ENCODE measurements at regions of chr14 and their contacts with region 1.

Region 1: DNA sequence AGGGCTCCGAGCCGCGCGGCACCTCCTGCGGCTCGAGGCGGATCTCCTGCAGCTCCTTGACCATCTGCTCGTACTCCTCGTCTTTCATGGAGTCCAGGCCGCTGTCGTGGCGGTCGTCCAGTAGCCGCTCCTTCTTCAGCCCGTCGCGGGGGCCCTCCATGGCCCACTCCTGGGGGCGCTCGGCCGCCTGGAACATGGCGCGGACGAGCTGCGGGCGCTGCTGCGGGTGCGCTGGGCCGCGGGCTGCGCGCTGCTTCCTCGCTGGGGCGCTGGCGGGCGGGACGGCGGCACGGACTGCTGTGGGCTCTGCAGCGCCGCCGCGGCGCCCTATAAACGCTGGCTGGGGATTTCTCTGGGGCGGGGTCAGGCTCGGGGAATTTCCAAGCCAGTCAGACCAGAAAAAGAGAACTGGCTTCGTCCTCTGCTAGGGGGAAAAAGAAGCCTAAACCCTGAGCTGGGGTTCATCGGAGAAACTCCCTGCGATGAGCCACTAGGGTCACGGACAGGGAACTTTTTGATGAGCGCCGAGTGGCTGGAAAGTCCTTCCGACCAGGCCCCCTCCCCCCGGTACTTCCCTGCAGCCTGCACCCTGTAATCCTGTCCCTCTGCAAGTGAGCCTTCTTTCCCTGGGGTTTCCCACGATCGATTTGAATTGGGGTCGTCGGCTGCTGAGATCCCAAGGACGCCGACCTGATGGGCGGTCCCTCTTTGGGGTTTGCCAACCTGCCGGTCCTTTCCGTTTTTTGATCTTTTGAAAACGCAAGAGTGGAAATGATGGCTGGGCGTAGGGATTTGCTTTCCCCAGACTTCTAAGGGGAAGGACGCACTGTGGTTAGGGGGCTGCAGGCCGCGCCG is at the start of gene NFKBIA:
- DNase-seq: peak; percentile 69 to 88 (median 74)
- ATAC-seq: peak; percentile 90
- H3K4me3 ChIP-seq: peak within 1 kb of the TSS; percentile 89
- H3K27ac ChIP-seq: peak within 1 kb of the TSS; percentile 96
- H3K4me1 ChIP-seq: peaks cover 23 to 28% of the 10 kb centered on the region in 2 experiments
- H3K27me3 ChIP-seq: no peaks in the 10 kb centered on the region
- CTCF ChIP-seq: peak; percentile 44 to 96 (median 71); a peak in 5 of 6 replicates
- EP300 ChIP-seq: no peak
- POLR2A ChIP-seq: peak; percentile 75
- RAD21 ChIP-seq: peak; percentile 49 to 53; a peak in 3 of 4 replicates
- polyA plus RNA-seq, gene NFKBIA: 6.9 to 8.8 TPM

Region 2: GRCh38 chr14:34682787-34683321 is 721.8 kb before region 1 on chr14:
- CTCF ChIA-PET with region 1: no interaction called
- POLR2A ChIA-PET with region 1: no interaction called
- in situ Hi-C with region 1: loop called (anchors 10 kb)
- intact Hi-C with region 1: no loop called
- DNase-seq: peak in 1 of 4 experiments; percentile 12
- ATAC-seq: peak; percentile 60
- H3K4me3 ChIP-seq: no peak overlapping the region
- H3K27ac ChIP-seq: no peak overlapping the region; the same call in 2 of the 3 replicates
- H3K4me1 ChIP-seq: peaks cover 0 to 7% of the 10 kb centered on the region in 2 experiments; a peak in 2 of 5 replicates
- H3K27me3 ChIP-seq: no peaks in the 10 kb centered on the region
- CTCF ChIP-seq: no peak
- EP300 ChIP-seq: no peak
- POLR2A ChIP-seq: no peak
- RAD21 ChIP-seq: no peak

Region 3: DNA sequence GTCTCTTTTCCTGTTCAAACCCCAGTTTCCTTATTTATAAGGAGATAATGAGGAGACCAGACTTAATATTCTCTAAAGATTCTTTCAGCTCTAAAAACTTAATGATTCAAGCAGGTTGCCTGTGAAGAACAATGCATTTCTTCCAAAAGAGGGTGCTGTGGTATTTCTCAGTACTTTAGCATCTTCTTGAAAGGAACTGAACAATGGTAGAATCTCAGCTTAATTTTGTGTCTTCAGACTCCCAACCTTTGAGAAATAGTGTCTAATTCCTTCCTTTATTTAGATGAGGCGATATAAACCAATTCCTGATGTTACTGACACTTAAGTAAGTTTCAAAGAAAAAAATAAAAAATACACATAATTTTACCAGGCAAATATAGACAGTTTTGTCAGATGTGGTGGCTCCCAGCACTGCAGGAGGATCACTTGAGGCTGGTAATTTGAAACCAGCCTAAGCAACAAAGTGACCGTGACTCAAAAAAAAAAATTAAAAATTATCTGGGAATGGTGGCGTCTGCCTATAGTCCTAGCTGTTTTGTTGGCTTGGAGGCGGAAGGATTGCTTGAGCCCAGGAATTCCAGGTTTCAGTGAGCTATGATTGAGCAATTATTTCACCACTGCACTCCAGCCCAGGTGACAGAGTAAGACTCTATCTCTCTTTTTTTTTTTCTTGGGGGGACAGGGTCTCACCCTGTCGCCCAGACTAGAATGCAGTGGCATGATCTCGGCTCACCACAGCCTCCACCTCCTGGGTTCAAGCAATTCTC is 189.4 kb before region 1 on chr14:
- CTCF ChIA-PET with region 1: no interaction called
- POLR2A ChIA-PET with region 1: interaction called, 6 read pairs
- in situ Hi-C with region 1: loop called (anchors 5 kb)
- intact Hi-C with region 1: no loop called
- DNase-seq: peak in 2 of 4 experiments; percentile 6 to 24
- ATAC-seq: peak; percentile 61; the same call in 2 of the 3 replicates
- H3K4me3 ChIP-seq: no peak overlapping the region
- H3K27ac ChIP-seq: no peak overlapping the region
- H3K4me1 ChIP-seq: no peaks in the 10 kb centered on the region; a peak in 1 of 5 replicates
- H3K27me3 ChIP-seq: no peaks in the 10 kb centered on the region
- CTCF ChIP-seq: peak in 1 of 3 experiments; percentile 42; a peak in 3 of 6 replicates
- EP300 ChIP-seq: no peak
- POLR2A ChIP-seq: no peak
- RAD21 ChIP-seq: peak; percentile 52 to 65

Region 4: DNA sequence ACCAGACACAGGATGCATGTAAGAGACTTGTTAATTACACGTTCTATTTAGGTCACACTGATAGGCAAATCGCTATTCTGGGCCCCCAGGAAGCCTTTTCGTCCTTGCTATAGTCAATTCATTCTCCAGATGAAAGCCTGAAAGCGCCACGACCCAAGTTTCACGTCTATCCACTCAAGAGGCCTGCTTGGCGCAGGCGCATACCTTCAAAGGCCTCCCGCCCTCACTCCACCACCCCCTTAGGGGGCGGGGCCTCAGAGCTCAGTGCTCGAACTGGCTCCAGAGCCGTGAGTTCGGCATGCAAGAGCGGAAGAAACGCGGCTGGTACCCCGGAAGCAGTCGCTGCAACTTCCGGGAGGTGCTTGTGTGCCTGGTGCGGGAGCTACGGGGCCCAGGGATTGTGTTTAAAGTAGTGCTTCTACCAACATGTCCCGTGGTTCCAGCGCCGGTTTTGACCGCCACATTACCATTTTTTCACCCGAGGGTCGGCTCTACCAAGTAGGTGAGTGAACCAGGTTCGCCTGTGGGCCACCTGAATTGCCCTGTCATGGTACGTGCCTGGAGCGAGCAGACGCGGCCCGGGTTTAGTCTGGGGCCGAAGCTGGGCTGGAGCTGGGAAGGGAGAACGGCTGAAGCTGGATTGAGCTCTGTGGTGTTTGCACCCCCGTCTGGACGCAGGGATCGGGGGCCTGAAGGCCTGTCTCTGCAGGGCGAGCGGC is 112.5 kb before region 1 on chr14 and contains the start of gene PSMA6:
- CTCF ChIA-PET with region 1: no interaction called
- POLR2A ChIA-PET with region 1: interaction called, 24 read pairs
- in situ Hi-C with region 1: no loop called
- intact Hi-C with region 1: loop called (anchors 5 kb)
- DNase-seq: peak; percentile 93 to 99 (median 96)
- ATAC-seq: peak; percentile 94
- H3K4me3 ChIP-seq: peak within 1 kb of the TSS; percentile 79
- H3K27ac ChIP-seq: peak within 1 kb of the TSS; percentile 88
- H3K4me1 ChIP-seq: peaks cover 4 to 12% of the 10 kb centered on the region in 2 experiments; a peak in 4 of 5 replicates
- H3K27me3 ChIP-seq: no peaks in the 10 kb centered on the region
- CTCF ChIP-seq: no peak
- EP300 ChIP-seq: no peak
- POLR2A ChIP-seq: peak; percentile 87
- RAD21 ChIP-seq: no peak
- polyA plus RNA-seq, gene PSMA6: 922 to 952 TPM

Region 5: DNA sequence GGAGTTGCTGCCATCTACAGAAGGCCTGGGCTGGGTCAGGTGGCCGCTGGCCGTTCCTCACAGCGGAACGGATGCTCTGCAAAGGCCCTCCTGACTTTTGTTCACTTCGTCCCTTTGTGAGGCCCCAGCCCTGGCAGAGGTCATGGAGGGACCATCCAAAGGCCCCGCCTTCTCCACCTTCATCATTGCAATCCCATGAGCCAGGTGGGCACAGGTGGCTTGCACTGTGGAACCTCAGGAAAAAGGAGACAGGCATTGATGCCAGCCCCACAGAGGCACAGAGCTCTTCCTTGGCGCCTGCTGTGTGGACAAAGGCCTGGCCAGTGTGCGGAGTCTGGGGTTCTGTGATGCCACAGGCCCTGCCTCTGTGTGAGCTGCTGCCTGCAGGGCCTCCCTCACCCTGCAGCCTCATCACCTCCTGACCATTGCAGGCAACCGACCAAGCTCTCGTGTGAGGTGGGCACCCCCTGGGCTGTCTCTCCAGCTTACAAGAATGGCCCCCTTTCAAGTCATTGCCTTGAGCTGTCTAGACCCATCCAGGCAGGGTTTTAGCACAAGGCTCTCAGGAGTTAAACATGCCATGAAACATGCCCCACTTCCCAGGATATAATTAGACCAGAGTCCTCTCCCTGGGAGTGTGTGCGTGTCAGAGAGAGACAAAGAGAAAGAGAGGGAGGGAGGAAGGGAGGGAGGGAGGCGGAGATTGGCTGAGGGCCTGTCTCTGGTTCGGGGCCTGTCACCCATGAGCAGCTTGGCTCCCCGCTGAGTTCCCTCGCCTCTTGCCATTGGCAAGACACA is 19.4 kb before region 1 on chr14:
- CTCF ChIA-PET with region 1: no interaction called
- POLR2A ChIA-PET with region 1: interaction called, 49 read pairs
- in situ Hi-C with region 1: no loop called
- intact Hi-C with region 1: no loop called
- DNase-seq: peak; percentile 57 to 84 (median 62)
- ATAC-seq: peak; percentile 63
- H3K4me3 ChIP-seq: no peak overlapping the region
- H3K27ac ChIP-seq: peak overlapping the region; percentile 12; the same call in 1 of the 3 replicates
- H3K4me1 ChIP-seq: peaks cover 30 to 31% of the 10 kb centered on the region in 2 experiments; a peak in 4 of 5 replicates
- H3K27me3 ChIP-seq: no peaks in the 10 kb centered on the region
- CTCF ChIP-seq: no peak
- EP300 ChIP-seq: no peak
- POLR2A ChIP-seq: no peak
- RAD21 ChIP-seq: no peak

Region 6: GRCh38 chr14:35519986-35520385 is 115.3 kb after region 1 on chr14:
- CTCF ChIA-PET with region 1: no interaction called
- POLR2A ChIA-PET with region 1: no interaction called
- in situ Hi-C with region 1: no loop called
- intact Hi-C with region 1: no loop called
- DNase-seq: no peak
- ATAC-seq: no peak
- H3K4me3 ChIP-seq: no peak overlapping the region
- H3K27ac ChIP-seq: no peak overlapping the region
- H3K4me1 ChIP-seq: no peaks in the 10 kb centered on the region
- H3K27me3 ChIP-seq: no peaks in the 10 kb centered on the region
- CTCF ChIP-seq: no peak
- EP300 ChIP-seq: no peak
- POLR2A ChIP-seq: no peak
- RAD21 ChIP-seq: no peak

Measured in K562 (cell line).